ENCODE measurements at regions of chr7 and their contacts with region 1.

Region 1: GRCh38 chr7:45917658-45918057 is 3.4 kb downstream of the IGFBP3 start:
- DNase-seq: peak; percentile 59 to 97 (median 83)
- ATAC-seq: peak; percentile 38 to 73 (median 65)
- H3K4me3 ChIP-seq: no peak overlapping the region
- H3K27ac ChIP-seq: no peak overlapping the region
- H3K4me1 ChIP-seq: peaks cover 0 to 20% (median 11%) of the 10 kb centered on the region in 3 donors
- H3K27me3 ChIP-seq: peaks cover 0 to 14% (median 2%) of the 10 kb centered on the region in 4 donors
- CTCF ChIP-seq: peak; percentile 81 to 98 (median 91)

Region 2: GRCh38 chr7:45543461-45543860 is 374.2 kb before region 1 on chr7:
- intact Hi-C with region 1: no loop called
- DNase-seq: no peak
- ATAC-seq: no peak
- H3K4me3 ChIP-seq: no peak overlapping the region
- H3K27ac ChIP-seq: no peak overlapping the region
- H3K4me1 ChIP-seq: no peaks in the 10 kb centered on the region
- H3K27me3 ChIP-seq: no peaks in the 10 kb centered on the region
- CTCF ChIP-seq: no peak

Region 3: GRCh38 chr7:45812946-45813345 is 104.7 kb before region 1 on chr7:
- intact Hi-C with region 1: no loop called
- DNase-seq: no peak
- ATAC-seq: no peak
- H3K4me3 ChIP-seq: no peak overlapping the region
- H3K27ac ChIP-seq: no peak overlapping the region
- H3K4me1 ChIP-seq: no peaks in the 10 kb centered on the region
- H3K27me3 ChIP-seq: no peaks in the 10 kb centered on the region
- CTCF ChIP-seq: no peak

Region 4: GRCh38 chr7:46352004-46352954 is 434.6 kb after region 1 on chr7:
- intact Hi-C with region 1: loop called (anchors 5 to 10 kb)
- DNase-seq: peak in 1 of 6 donors; percentile 41
- ATAC-seq: peak in 3 of 4 donors; percentile 65 to 82 (median 72)
- H3K4me3 ChIP-seq: no peak overlapping the region
- H3K27ac ChIP-seq: no peak overlapping the region
- H3K4me1 ChIP-seq: no peaks in the 10 kb centered on the region
- H3K27me3 ChIP-seq: no peaks in the 10 kb centered on the region
- CTCF ChIP-seq: peak in 3 of 4 donors; percentile 18 to 28 (median 26)

Region 5: GRCh38 chr7:46558482-46559193 is 641.0 kb after region 1 on chr7:
- intact Hi-C with region 1: no loop called
- DNase-seq: no peak
- ATAC-seq: no peak
- H3K4me3 ChIP-seq: no peak overlapping the region
- H3K27ac ChIP-seq: no peak overlapping the region
- H3K4me1 ChIP-seq: peaks cover 0 to 5% (median 0%) of the 10 kb centered on the region in 3 donors
- H3K27me3 ChIP-seq: no peaks in the 10 kb centered on the region
- CTCF ChIP-seq: no peak

Region 6: GRCh38 chr7:47088329-47089067 is 1170.8 kb after region 1 on chr7:
- intact Hi-C with region 1: loop called in 1 of 3 experiments (anchors 10 kb)
- DNase-seq: peak in 4 of 6 donors; percentile 37 to 61 (median 49)
- ATAC-seq: peak; percentile 83 to 99 (median 95)
- H3K4me3 ChIP-seq: no peak overlapping the region
- H3K27ac ChIP-seq: no peak overlapping the region
- H3K4me1 ChIP-seq: no peaks in the 10 kb centered on the region
- H3K27me3 ChIP-seq: no peaks in the 10 kb centered on the region
- CTCF ChIP-seq: peak; percentile 64 to 85 (median 72)

Region 7: DNA sequence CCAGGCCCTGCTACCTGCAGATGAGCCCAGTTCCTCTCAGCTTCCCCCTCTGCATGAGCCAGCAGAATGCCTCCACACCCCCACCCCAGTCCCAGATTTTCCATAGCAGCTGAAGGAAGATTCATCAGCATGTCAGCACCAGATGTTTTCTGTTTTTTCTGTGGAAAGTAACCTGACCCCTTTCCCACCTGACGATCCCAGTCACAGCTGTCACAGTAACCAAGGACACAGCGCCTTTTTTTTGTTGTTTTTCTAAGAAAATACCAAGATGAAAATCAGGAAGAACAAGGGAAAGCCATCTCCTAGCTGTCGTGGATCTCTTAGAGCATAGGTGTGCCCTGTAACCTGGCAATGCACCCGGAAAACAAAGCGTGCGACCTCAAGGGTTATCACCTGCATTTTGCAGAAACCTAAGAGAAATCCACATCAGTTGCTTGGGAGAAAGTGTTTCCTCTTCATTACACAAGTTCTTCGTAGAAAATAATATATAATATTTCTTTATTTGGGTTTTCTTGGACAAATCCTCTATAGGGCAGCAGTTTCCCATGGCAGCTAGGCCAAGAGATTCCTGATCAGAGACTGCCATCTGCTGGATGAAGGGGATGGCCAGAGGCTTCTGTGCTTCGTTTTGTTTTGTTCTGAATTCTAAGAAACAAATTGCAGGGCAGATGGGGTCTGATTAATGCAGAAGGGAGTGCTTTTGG is 1262.3 kb after region 1 on chr7:
- intact Hi-C with region 1: loop called in 2 of 3 experiments (anchors 10 kb)
- DNase-seq: peak in 4 of 6 donors; percentile 43 to 73 (median 55)
- ATAC-seq: peak; percentile 66 to 85 (median 70)
- H3K4me3 ChIP-seq: no peak overlapping the region
- H3K27ac ChIP-seq: no peak overlapping the region
- H3K4me1 ChIP-seq: peaks cover 32 to 46% (median 43%) of the 10 kb centered on the region in 3 donors
- H3K27me3 ChIP-seq: no peaks in the 10 kb centered on the region
- CTCF ChIP-seq: peak; percentile 65 to 75 (median 71)

Region 8: GRCh38 chr7:47254081-47255006 is 1336.7 kb after region 1 on chr7:
- intact Hi-C with region 1: loop called in 1 of 3 experiments (anchors 10 kb)
- DNase-seq: peak; percentile 76 to 94 (median 85)
- ATAC-seq: peak; percentile 93 to 97 (median 95)
- H3K4me3 ChIP-seq: peak overlapping the region; percentile 51 to 71 (median 56)
- H3K27ac ChIP-seq: peak overlapping the region; percentile 45 to 74 (median 66)
- H3K4me1 ChIP-seq: peaks cover 0 to 8% (median 0%) of the 10 kb centered on the region in 3 donors
- H3K27me3 ChIP-seq: no peaks in the 10 kb centered on the region
- CTCF ChIP-seq: peak; percentile 95 to 99 (median 96)

Measured in pancreas (tissue), 10 donors.